T-cell (primary cell): ENCODE measurements at regions of chr5 and their contacts with region 1.

Region 1: GRCh38 chr5:138989720-138990119 is 114.6 kb upstream of the LRRTM2 start:
- DNase-seq: no peak
- ATAC-seq: no peak
- H3K4me3 ChIP-seq: no peak overlapping the region
- H3K4me3 Mint-ChIP-seq: no peak overlapping the region
- H3K27ac ChIP-seq: no peak overlapping the region
- H3K27ac Mint-ChIP-seq: no peak overlapping the region
- H3K4me1 ChIP-seq: no peaks in the 10 kb centered on the region
- H3K4me1 Mint-ChIP-seq: no peaks in the 10 kb centered on the region
- H3K27me3 ChIP-seq: no peaks in the 10 kb centered on the region
- H3K27me3 Mint-ChIP-seq: no peaks in the 10 kb centered on the region

Region 2: DNA sequence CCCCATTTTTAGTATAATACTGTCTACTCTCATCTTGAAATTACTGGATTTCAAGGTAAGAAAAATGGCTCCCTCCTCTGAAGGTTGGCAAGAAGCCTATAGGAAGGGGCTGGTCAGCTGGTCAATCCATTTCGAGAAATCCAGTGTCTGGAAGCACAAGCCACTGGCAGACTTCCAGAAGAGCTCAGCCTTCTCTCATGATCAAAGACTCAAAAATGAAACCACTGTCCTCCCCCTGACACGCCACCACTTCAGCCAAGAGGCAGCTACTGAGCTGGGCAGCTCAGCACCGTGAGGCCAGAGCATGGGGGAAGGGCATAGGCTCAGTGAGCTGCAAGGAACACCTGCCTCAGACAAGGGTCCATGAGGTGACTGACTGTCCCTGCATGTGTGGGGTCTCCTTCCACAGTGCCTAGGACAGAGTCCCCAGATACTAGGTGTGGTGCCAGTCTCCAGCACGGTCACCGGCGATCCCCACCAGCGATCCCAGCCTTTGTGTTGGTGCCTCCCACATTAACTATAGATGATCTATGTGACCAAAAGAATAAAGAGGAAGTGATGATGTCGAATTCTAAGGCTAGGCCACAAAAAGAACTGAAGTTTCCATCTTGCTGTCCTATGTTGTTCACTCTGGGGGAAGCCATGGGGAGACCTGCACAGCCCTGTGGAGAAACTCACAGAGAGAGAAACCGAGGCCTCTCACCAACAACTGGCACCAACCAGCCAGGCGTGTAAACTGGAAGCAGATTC is 14.4 kb before region 1 on chr5:
- CTCF ChIA-PET with region 1: no interaction called
- POLR2A ChIA-PET with region 1: no interaction called
- DNase-seq: no peak
- ATAC-seq: no peak
- H3K4me3 ChIP-seq: no peak overlapping the region
- H3K4me3 Mint-ChIP-seq: no peak overlapping the region
- H3K27ac ChIP-seq: no peak overlapping the region
- H3K27ac Mint-ChIP-seq: no peak overlapping the region
- H3K4me1 ChIP-seq: peaks cover 6 to 13% of the 10 kb centered on the region in 2 experiments
- H3K4me1 Mint-ChIP-seq: peaks cover 8 to 11% (median 10%) of the 10 kb centered on the region in 3 donors
- H3K27me3 ChIP-seq: no peaks in the 10 kb centered on the region
- H3K27me3 Mint-ChIP-seq: no peaks in the 10 kb centered on the region

Region 3: GRCh38 chr5:139043157-139043905 is 53.6 kb after region 1 on chr5:
- CTCF ChIA-PET with region 1: interaction called in 1 of 2 experiments, 10 read pairs
- POLR2A ChIA-PET with region 1: no interaction called
- DNase-seq: no peak
- ATAC-seq: no peak
- H3K4me3 ChIP-seq: no peak overlapping the region
- H3K4me3 Mint-ChIP-seq: no peak overlapping the region
- H3K27ac ChIP-seq: no peak overlapping the region
- H3K27ac Mint-ChIP-seq: no peak overlapping the region
- H3K4me1 ChIP-seq: no peaks in the 10 kb centered on the region
- H3K4me1 Mint-ChIP-seq: no peaks in the 10 kb centered on the region
- H3K27me3 ChIP-seq: no peaks in the 10 kb centered on the region
- H3K27me3 Mint-ChIP-seq: no peaks in the 10 kb centered on the region

Region 4: GRCh38 chr5:139633295-139634027 is 643.7 kb after region 1 on chr5:
- CTCF ChIA-PET with region 1: no interaction called
- POLR2A ChIA-PET with region 1: no interaction called
- DNase-seq: peak in 30 of 35 experiments; percentile 32 to 87 (median 54)
- ATAC-seq: peak; percentile 33 to 49 (median 42)
- H3K4me3 ChIP-seq: no peak overlapping the region
- H3K4me3 Mint-ChIP-seq: no peak overlapping the region
- H3K27ac ChIP-seq: no peak overlapping the region
- H3K27ac Mint-ChIP-seq: peak overlapping the region in 1 of 2 donors; percentile 19
- H3K4me1 ChIP-seq: peaks cover 17 to 51% of the 10 kb centered on the region in 2 experiments
- H3K4me1 Mint-ChIP-seq: peaks cover 41 to 43% (median 42%) of the 10 kb centered on the region in 3 donors
- H3K27me3 ChIP-seq: no peaks in the 10 kb centered on the region
- H3K27me3 Mint-ChIP-seq: no peaks in the 10 kb centered on the region